ENCODE measurements at regions of chr9 and their contacts with region 1.

Region 1: GRCh38 chr9:133184962-133185361 is 21.2 kb upstream of the GBGT1 start:
- DNase-seq: no peak
- H3K4me3 ChIP-seq: no peak overlapping the region
- H3K27ac ChIP-seq: no peak overlapping the region
- H3K4me1 ChIP-seq: no peaks in the 10 kb centered on the region
- H3K27me3 ChIP-seq: peaks cover 0 to 13% (median 9%) of the 10 kb centered on the region in 4 experiments; a peak in 4 of 7 replicates
- CTCF ChIP-seq: peak; percentile 9 to 58 (median 54)
- EP300 ChIP-seq: no peak
- POLR2A ChIP-seq: no peak
- RAD21 ChIP-seq: peak; percentile 46 to 62; a peak in 3 of 4 replicates

Region 2: GRCh38 chr9:133087429-133088145 is 97.4 kb before region 1 on chr9:
- CTCF ChIA-PET with region 1: no interaction called
- POLR2A ChIA-PET with region 1: no interaction called
- DNase-seq: no peak
- H3K4me3 ChIP-seq: no peak overlapping the region
- H3K27ac ChIP-seq: no peak overlapping the region
- H3K4me1 ChIP-seq: no peaks in the 10 kb centered on the region
- H3K27me3 ChIP-seq: peaks cover 0 to 3% (median 0%) of the 10 kb centered on the region in 4 experiments; a peak in 1 of 7 replicates
- CTCF ChIP-seq: no peak
- EP300 ChIP-seq: no peak
- POLR2A ChIP-seq: no peak
- RAD21 ChIP-seq: no peak

Region 3: DNA sequence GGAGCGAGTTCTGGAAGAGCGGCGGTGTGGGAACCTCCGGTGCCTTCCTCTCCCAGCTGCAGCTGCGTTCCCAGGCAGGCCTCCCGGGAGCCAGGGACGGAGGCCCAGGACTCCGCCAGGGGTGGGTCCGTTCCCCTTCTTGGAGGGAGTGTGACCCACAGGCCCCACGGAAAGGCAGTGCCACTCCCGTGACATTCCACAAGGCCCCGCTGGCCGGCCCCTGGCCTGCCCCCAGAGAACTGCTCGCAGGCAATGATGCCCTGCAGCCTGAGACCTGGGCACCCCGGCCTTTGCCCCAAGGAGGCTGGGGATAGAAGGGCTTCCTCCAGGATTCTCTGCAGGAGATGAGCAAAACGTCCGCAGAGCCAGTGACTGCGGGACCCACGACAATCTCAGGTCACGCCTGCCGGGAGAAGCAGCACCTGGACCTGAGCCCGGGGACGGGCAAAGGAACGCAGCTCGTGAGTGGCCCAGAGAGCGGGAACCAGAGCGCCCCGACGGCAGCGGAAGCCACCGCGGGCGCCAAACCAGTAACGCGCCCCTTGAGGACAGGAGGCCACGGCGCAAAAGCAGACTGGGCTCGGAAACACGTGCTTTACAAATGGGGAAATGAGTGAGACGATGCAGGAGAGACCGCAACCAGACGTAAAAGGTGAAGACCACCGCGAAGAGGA is 14.8 kb after region 1 on chr9:
- CTCF ChIA-PET with region 1: interaction called, 38 read pairs
- POLR2A ChIA-PET with region 1: no interaction called
- DNase-seq: peak in 1 of 2 experiments; percentile 59
- H3K4me3 ChIP-seq: no peak overlapping the region
- H3K27ac ChIP-seq: no peak overlapping the region
- H3K4me1 ChIP-seq: no peaks in the 10 kb centered on the region; a peak in 1 of 7 replicates
- H3K27me3 ChIP-seq: peaks cover 0 to 30% (median 18%) of the 10 kb centered on the region in 4 experiments; a peak in 6 of 7 replicates
- CTCF ChIP-seq: peak; percentile 40 to 54 (median 45)
- EP300 ChIP-seq: no peak
- POLR2A ChIP-seq: no peak
- RAD21 ChIP-seq: no peak; a peak in 1 of 4 replicates

Region 4: GRCh38 chr9:133238851-133239532 is 54.0 kb after region 1 on chr9:
- CTCF ChIA-PET with region 1: interaction called, 69 read pairs
- POLR2A ChIA-PET with region 1: no interaction called
- DNase-seq: peak; percentile 86 to 91
- H3K4me3 ChIP-seq: peak overlapping the region; percentile 29 to 62 (median 49); a peak in 7 of 8 replicates
- H3K27ac ChIP-seq: peak overlapping the region; percentile 63; the same call in 1 of the 2 replicates
- H3K4me1 ChIP-seq: peaks cover 0 to 2% (median under 1%) of the 10 kb centered on the region in 4 experiments; a peak in 2 of 7 replicates
- H3K27me3 ChIP-seq: peaks cover 0 to 12% (median 6%) of the 10 kb centered on the region in 4 experiments; a peak in 3 of 7 replicates
- CTCF ChIP-seq: peak; percentile 85 to 99 (median 97)
- EP300 ChIP-seq: 0 out of 3 replicates have a peak, but pooled peaks of 1 of the 2 experiments have one; percentile 39
- POLR2A ChIP-seq: no peak
- RAD21 ChIP-seq: peak; percentile 58 to 78

Region 5: DNA sequence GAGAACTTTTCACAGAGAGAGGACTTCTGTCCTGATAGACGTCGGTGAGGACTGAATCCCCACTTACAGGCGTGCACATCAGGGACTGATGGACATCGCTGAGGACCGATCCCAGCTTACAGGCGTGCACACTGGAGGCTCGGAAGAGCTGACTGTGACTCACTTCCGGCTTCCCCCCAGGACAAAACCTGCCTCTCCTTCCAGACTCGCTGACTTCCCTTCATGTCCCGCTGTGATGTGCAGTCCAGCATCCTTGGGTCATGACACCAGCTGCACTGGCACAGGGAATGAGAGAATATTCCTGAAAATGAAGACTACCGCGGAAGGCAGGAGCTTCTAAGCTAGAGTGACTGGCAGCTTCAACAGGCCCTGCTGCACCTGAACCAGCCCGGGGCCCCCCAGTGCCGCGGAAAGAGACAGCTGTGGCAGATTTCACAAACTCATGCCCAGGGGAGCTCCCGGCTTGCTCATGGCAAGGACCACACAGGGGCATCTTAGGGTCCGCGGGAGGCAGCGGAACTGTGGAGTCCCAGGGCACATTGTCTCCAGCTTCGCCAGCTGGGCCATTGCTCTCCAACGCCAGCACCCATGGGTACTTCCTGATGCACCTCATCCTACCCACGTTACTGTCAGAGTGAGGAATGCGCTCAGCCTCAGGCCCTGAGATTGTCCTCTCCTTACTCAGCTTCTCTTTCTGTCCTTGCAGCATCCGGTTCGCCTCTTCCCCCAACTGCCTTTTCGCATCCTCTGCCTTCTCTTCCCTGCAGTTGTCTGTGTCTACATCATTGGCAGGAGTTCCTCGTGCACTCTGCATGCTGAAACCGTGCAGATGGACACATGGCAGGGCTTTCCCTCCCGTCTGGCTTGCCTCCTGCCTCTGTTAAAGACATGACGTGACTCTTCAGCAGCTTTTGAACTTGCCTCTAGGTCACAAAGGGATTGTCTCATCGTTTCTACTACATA is 121.6 kb after region 1 on chr9:
- CTCF ChIA-PET with region 1: interaction called, 22 read pairs
- POLR2A ChIA-PET with region 1: no interaction called
- DNase-seq: no peak
- H3K4me3 ChIP-seq: no peak overlapping the region
- H3K27ac ChIP-seq: no peak overlapping the region
- H3K4me1 ChIP-seq: no peaks in the 10 kb centered on the region
- H3K27me3 ChIP-seq: no peaks in the 10 kb centered on the region; a peak in 1 of 7 replicates
- CTCF ChIP-seq: no peak
- EP300 ChIP-seq: no peak
- POLR2A ChIP-seq: no peak
- RAD21 ChIP-seq: no peak

Region 6: GRCh38 chr9:133335878-133336811 is 151.2 kb after region 1 on chr9 and contains the start of gene SURF6:
- CTCF ChIA-PET with region 1: interaction called, 123 read pairs
- POLR2A ChIA-PET with region 1: interaction called, 5 read pairs
- DNase-seq: peak; percentile 64 to 92
- H3K4me3 ChIP-seq: peak within 1 kb of the TSS; percentile 64 to 95 (median 92)
- H3K27ac ChIP-seq: peak within 1 kb of the TSS; percentile 74; the same call in 1 of the 2 replicates
- H3K4me1 ChIP-seq: peaks cover 0 to 9% (median 2%) of the 10 kb centered on the region in 4 experiments; a peak in 1 of 7 replicates
- H3K27me3 ChIP-seq: no peaks in the 10 kb centered on the region
- CTCF ChIP-seq: peak in 1 of 3 experiments; percentile 1; a peak in 1 of 4 replicates
- EP300 ChIP-seq: peak in 1 of 2 experiments; percentile 13; a peak in 1 of 3 replicates
- POLR2A ChIP-seq: peak in 1 of 2 experiments; percentile 82; a peak in 2 of 3 replicates
- RAD21 ChIP-seq: no peak
- total RNA-seq, gene SURF6: 23.7 and 26.7 TPM in 2 replicates

Measured in H1 (cell line).